Naive thymus-derived CD4-positive, alpha-beta T cell (primary cell): ENCODE measurements at regions of chrX and their contacts with region 1.

Region 1: GRCh38 chrX:71365876-71366673 is at the start of gene TAF1:
- DNase-seq: peak; percentile 61 to 94 (median 90)
- ATAC-seq: peak; percentile 93
- H3K4me3 ChIP-seq: peak within 1 kb of the TSS; percentile 81
- H3K4me3 Mint-ChIP-seq: peak within 1 kb of the TSS; percentile 86 to 99 (median 96)
- H3K27ac ChIP-seq: peak within 1 kb of the TSS; percentile 94
- H3K27ac Mint-ChIP-seq: peak within 1 kb of the TSS; percentile 97 to 100 (median 98)
- H3K4me1 ChIP-seq: peaks cover 5 to 9% of the 10 kb centered on the region in 2 donors
- H3K4me1 Mint-ChIP-seq: peaks cover 12 to 34% (median 27%) of the 10 kb centered on the region in 7 donors
- H3K27me3 ChIP-seq: no peaks in the 10 kb centered on the region
- H3K27me3 Mint-ChIP-seq: no peaks in the 10 kb centered on the region
- total RNA-seq, gene TAF1: 55.4 to 86.7 (median 76.1) TPM

Region 2: GRCh38 chrX:70133303-70134115 is 1232.6 kb before region 1 on chrX and contains the start of gene IGBP1:
- CTCF ChIA-PET with region 1: no interaction called
- POLR2A ChIA-PET with region 1: no interaction called
- intact Hi-C with region 1: loop called in 1 of 2 experiments (anchors 10 kb)
- DNase-seq: peak; percentile 40 to 90 (median 82)
- ATAC-seq: peak; percentile 90
- H3K4me3 ChIP-seq: peak within 1 kb of the TSS; percentile 94
- H3K4me3 Mint-ChIP-seq: peak within 1 kb of the TSS; percentile 95 to 99 (median 99)
- H3K27ac ChIP-seq: peak within 1 kb of the TSS; percentile 82
- H3K27ac Mint-ChIP-seq: peak within 1 kb of the TSS; percentile 91 to 99 (median 97)
- H3K4me1 ChIP-seq: peaks cover 16 to 18% of the 10 kb centered on the region in 2 donors
- H3K4me1 Mint-ChIP-seq: peaks cover 14 to 47% (median 29%) of the 10 kb centered on the region in 7 donors
- H3K27me3 ChIP-seq: no peaks in the 10 kb centered on the region
- H3K27me3 Mint-ChIP-seq: no peaks in the 10 kb centered on the region
- total RNA-seq, gene IGBP1: 46.7 to 70.1 (median 58.9) TPM

Region 3: GRCh38 chrX:71111141-71111843 is 254.8 kb before region 1 on chrX and contains the start of gene IL2RG:
- CTCF ChIA-PET with region 1: no interaction called
- POLR2A ChIA-PET with region 1: interaction called, 8 read pairs
- intact Hi-C with region 1: loop called in 1 of 2 experiments (anchors 5 kb)
- DNase-seq: peak; percentile 37 to 92 (median 87)
- ATAC-seq: peak; percentile 95
- H3K4me3 ChIP-seq: peak within 1 kb of the TSS; percentile 80
- H3K4me3 Mint-ChIP-seq: peak within 1 kb of the TSS; percentile 93 to 98 (median 98)
- H3K27ac ChIP-seq: peak within 1 kb of the TSS; percentile 96
- H3K27ac Mint-ChIP-seq: peak within 1 kb of the TSS; percentile 96 to 100 (median 98)
- H3K4me1 ChIP-seq: peaks cover 28 to 39% of the 10 kb centered on the region in 2 donors
- H3K4me1 Mint-ChIP-seq: peaks cover 24 to 69% (median 43%) of the 10 kb centered on the region in 7 donors
- H3K27me3 ChIP-seq: no peaks in the 10 kb centered on the region
- H3K27me3 Mint-ChIP-seq: no peaks in the 10 kb centered on the region
- total RNA-seq, gene IL2RG: 228 to 671 (median 329) TPM

Region 4: GRCh38 chrX:71254092-71254941 is 111.8 kb before region 1 on chrX and contains the start of gene ZMYM3:
- CTCF ChIA-PET with region 1: no interaction called
- POLR2A ChIA-PET with region 1: interaction called, 52 read pairs
- intact Hi-C with region 1: loop called (anchors 1 kb)
- DNase-seq: peak; percentile 46 to 87 (median 78)
- ATAC-seq: peak; percentile 89
- H3K4me3 ChIP-seq: peak within 1 kb of the TSS; percentile 79
- H3K4me3 Mint-ChIP-seq: peak within 1 kb of the TSS; percentile 76 to 97 (median 90)
- H3K27ac ChIP-seq: peak within 1 kb of the TSS; percentile 91
- H3K27ac Mint-ChIP-seq: peak within 1 kb of the TSS; percentile 87 to 96 (median 91)
- H3K4me1 ChIP-seq: peaks cover 0 to 20% of the 10 kb centered on the region in 2 donors
- H3K4me1 Mint-ChIP-seq: peaks cover 0 to 30% (median 18%) of the 10 kb centered on the region in 7 donors
- H3K27me3 ChIP-seq: no peaks in the 10 kb centered on the region
- H3K27me3 Mint-ChIP-seq: no peaks in the 10 kb centered on the region
- total RNA-seq, gene ZMYM3: 21.2 to 34.1 (median 21.6) TPM

Region 5: GRCh38 chrX:71420686-71421085 is 54.6 kb after region 1 on chrX:
- CTCF ChIA-PET with region 1: no interaction called
- POLR2A ChIA-PET with region 1: no interaction called
- intact Hi-C with region 1: no loop called
- DNase-seq: no peak
- ATAC-seq: no peak
- H3K4me3 ChIP-seq: no peak overlapping the region
- H3K4me3 Mint-ChIP-seq: no peak overlapping the region
- H3K27ac ChIP-seq: no peak overlapping the region
- H3K27ac Mint-ChIP-seq: peak overlapping the region in 1 of 9 donors; percentile 31
- H3K4me1 ChIP-seq: no peaks in the 10 kb centered on the region
- H3K4me1 Mint-ChIP-seq: no peaks in the 10 kb centered on the region
- H3K27me3 ChIP-seq: no peaks in the 10 kb centered on the region
- H3K27me3 Mint-ChIP-seq: no peaks in the 10 kb centered on the region

Region 6: DNA sequence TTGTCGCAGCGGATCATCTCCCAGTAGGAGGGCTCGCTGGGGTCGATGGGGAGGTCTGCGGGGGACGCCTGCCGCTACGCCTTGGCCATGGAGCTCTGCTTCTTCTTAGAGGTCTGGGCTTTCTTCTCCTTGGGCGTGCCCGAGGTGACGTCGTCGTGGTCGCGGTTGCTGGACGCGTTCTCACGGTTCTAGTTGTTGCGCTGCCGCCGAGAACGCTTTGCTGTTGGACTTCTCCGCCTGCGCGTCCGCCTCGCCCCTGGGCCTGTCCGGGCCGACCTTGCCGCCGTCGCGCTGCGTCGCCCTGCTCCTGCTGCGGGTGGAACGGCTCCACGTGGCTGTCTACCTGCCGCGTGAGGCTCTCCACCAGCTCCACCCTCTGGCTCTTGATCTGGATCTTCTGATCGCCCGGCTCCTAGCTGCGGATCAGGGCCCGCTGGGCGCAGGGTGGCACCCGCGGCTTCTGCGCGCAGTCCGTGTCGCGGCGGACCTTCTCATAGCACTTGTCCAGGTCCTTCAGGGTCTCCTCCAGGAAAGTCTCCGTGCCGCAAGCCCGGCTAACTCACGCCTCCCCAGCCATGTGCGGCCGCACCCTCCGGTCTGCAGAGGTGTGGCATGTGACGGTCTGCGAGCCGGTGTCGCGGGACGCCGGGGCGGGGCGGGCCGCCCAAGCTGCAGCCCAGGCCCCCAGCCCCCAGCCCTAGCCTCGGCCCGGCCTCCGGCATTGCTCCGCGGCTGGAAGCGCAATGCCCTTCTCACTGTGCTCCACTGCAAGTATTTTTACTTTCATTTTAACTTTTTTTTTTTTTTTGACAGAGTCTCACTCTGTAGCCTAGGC is 126.4 kb after region 1 on chrX:
- CTCF ChIA-PET with region 1: no interaction called
- POLR2A ChIA-PET with region 1: interaction called, 4 read pairs
- intact Hi-C with region 1: loop called in 1 of 2 experiments (anchors 1 kb)
- DNase-seq: peak; percentile 16 to 53 (median 43)
- ATAC-seq: peak; percentile 86
- H3K4me3 ChIP-seq: peak overlapping the region; percentile 68
- H3K4me3 Mint-ChIP-seq: peak overlapping the region; percentile 79 to 88 (median 84)
- H3K27ac ChIP-seq: peak overlapping the region; percentile 55
- H3K27ac Mint-ChIP-seq: peak overlapping the region in 8 of 9 donors; percentile 43 to 81 (median 56)
- H3K4me1 ChIP-seq: no peaks in the 10 kb centered on the region
- H3K4me1 Mint-ChIP-seq: peaks cover 4 to 17% (median 11%) of the 10 kb centered on the region in 7 donors
- H3K27me3 ChIP-seq: no peaks in the 10 kb centered on the region
- H3K27me3 Mint-ChIP-seq: peaks cover 0 to 2% (median 0%) of the 10 kb centered on the region in 5 donors